ENCODE measurements at regions of chr2 and their contacts with region 1.

Region 1: DNA sequence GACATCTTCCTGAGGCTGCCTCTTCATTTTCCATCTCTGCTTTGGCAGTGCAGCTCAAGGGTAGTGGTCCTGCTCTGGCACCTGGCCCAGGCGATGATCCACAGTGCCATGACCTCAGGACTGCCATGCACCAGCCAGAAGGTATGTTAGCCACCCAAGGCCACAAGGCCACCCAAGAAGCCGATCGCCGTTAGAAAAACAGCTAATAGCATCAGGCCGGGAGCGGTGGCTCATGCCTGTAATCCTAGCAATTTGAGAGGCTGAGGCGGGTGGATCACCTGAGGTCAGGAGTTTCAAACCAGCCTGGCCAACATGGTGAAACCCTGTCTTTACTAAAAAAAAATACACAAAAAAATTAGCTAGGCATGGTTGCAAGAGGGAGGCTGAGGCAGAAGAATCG is 28.4 kb upstream of the UGGT1 start:
- DNase-seq: no peak
- H3K4me3 ChIP-seq: no peak overlapping the region
- H3K27ac ChIP-seq: no peak overlapping the region
- H3K4me1 ChIP-seq: peaks cover 0 to 4% of the 10 kb centered on the region in 2 experiments; a peak in 1 of 4 replicates
- H3K27me3 ChIP-seq: no peaks in the 10 kb centered on the region
- CTCF ChIP-seq: no peak
- EP300 ChIP-seq: no peak
- RAD21 ChIP-seq: no peak

Region 2: DNA sequence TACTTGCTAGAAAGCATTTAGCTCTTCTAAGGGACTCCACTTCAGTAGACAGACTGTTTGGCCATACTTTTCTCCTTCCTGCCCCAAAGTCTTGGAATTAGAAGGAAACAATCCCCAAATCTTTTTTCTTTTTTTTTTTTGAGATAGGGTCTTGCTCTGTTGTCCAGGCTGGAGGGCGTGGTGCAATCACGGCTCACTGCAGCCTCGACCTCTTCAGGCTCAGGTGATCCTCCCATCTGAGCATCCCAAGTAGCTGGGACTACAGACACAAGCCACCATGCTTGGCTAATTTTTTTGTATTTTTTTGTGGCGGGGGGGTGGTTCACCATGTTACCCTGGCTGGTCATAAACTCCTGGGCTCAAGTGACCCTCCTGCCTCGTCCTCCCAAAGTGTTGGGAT is 22.2 kb after region 1 on chr2:
- CTCF ChIA-PET with region 1: interaction called, 33 read pairs
- POLR2A ChIA-PET with region 1: no interaction called
- DNase-seq: no peak
- H3K4me3 ChIP-seq: no peak overlapping the region
- H3K27ac ChIP-seq: no peak overlapping the region
- H3K4me1 ChIP-seq: no peaks in the 10 kb centered on the region
- H3K27me3 ChIP-seq: no peaks in the 10 kb centered on the region; the same call in 1 of the 2 replicates
- CTCF ChIP-seq: no peak
- EP300 ChIP-seq: no peak
- RAD21 ChIP-seq: no peak

Region 3: DNA sequence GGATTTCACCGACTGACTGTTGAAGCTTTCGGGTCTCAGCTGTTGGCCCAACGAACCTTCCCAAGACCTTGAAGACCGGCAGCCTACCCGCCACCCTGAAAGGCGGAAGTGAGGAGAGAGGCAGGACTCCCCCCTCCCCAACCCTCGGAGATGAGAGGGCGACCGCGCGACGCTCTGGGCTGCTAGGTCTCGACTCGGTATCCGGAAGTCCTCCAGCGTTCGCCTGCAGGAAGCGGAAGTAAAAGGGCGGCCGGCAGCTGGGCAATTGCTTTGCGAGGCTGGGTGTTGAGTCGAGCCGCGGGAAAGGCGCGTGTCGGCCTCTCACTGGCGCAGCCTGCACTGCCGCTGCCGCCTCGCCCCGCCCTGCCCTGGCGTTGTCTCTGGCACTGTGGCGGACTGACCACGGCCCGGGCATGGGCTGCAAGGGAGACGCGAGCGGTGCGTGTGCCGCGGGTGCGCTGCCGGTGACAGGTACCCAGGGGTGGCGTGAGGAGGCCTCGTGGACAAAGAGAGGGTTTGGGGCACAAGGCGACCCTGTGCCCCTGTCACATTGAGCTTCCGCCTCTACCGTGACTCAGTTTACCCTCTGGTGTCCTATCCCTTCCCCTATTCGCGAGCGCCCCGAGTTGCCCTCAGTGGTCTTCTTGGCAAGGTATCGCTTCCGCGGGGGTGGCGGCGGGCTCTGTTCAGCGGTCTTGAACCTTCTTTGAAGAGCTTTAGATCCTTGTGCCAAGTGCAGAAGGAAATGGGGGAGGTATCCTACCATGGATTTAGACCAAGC is 28.6 kb after region 1 on chr2 and contains the start of gene UGGT1:
- CTCF ChIA-PET with region 1: interaction called, 20 read pairs
- POLR2A ChIA-PET with region 1: no interaction called
- DNase-seq: peak; percentile 96
- H3K4me3 ChIP-seq: peak within 1 kb of the TSS; percentile 90 to 97
- H3K27ac ChIP-seq: peak within 1 kb of the TSS; percentile 78 to 84
- H3K4me1 ChIP-seq: peaks cover 0 to 13% of the 10 kb centered on the region in 2 experiments; a peak in 3 of 4 replicates
- H3K27me3 ChIP-seq: no peaks in the 10 kb centered on the region
- CTCF ChIP-seq: no peak
- EP300 ChIP-seq: 0 out of 4 replicates have a peak, but pooled peaks of 1 of the 2 experiments have one; percentile 18
- RAD21 ChIP-seq: no peak
- polyA plus RNA-seq, gene UGGT1: 20.0 and 25.7 TPM in 2 replicates

Region 4: DNA sequence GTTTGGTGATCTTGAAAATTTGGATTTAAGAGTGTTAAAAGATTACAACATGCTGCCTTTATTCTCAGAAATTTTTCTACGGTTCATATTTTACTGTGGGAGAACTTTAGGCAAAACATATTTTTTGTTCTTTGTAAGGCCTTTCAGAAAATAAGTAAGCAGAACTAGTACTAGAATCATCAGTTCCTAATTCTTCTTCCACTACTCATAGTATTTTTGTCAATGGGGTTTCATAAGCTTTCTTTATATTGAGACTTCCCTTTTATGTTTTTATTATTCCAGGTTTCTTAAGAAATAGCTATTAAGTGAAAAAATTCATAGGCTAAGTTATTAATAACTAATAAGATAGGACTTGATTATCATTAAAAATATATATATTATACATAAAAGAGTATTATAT is 40.8 kb after region 1 on chr2:
- CTCF ChIA-PET with region 1: interaction called, 11 read pairs
- POLR2A ChIA-PET with region 1: no interaction called
- DNase-seq: no peak
- H3K4me3 ChIP-seq: no peak overlapping the region
- H3K27ac ChIP-seq: no peak overlapping the region
- H3K4me1 ChIP-seq: peaks cover 0 to 5% of the 10 kb centered on the region in 2 experiments; a peak in 2 of 4 replicates
- H3K27me3 ChIP-seq: no peaks in the 10 kb centered on the region
- CTCF ChIP-seq: no peak
- EP300 ChIP-seq: no peak
- RAD21 ChIP-seq: no peak

Region 5: GRCh38 chr2:128137094-128137616 is 74.6 kb after region 1 on chr2:
- CTCF ChIA-PET with region 1: no interaction called
- POLR2A ChIA-PET with region 1: no interaction called
- DNase-seq: no peak
- H3K4me3 ChIP-seq: no peak overlapping the region
- H3K27ac ChIP-seq: no peak overlapping the region
- H3K4me1 ChIP-seq: no peaks in the 10 kb centered on the region
- H3K27me3 ChIP-seq: no peaks in the 10 kb centered on the region
- CTCF ChIP-seq: no peak
- EP300 ChIP-seq: no peak
- RAD21 ChIP-seq: no peak

Region 6: DNA sequence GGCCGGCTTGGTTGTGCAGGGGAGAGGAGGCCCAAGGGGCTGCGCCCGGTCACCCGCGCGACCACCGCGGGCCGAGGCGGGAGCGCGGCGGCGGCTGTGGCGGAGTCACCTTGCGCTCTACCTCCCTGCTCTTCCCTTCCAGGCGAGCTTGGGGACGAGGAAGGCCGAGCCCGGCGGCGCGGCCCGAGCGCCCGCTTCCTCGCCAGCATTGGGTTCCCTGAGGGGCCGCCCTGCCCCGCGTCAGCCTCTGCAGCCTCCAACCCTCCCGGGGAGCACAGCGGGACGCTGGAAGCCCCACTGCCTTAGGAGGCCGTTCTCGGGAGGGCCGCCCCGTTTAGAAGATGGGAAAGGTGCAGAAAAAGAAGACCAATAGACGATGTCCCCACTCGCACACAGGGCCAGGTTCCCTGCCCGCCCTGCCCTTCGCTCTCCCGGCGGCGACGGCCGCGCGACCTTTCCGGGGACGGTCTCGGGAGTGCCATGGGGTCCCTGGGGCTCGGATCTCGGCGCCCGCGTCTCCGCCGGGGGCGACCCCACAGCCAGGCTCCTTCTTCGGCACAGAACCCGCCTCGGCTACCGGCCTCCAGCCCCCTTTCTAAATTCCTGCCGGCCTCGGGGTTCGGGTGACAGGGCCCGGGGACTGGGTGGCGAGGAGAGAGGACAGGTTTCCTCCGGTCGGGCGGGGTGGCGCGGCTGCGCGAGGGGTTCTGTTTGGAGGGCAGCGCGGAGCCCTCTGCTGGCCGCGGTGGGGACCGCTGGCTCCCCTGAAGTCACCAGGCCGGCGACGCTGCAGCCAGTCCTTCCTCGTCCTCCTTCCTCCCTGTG is 170.6 kb after region 1 on chr2:
- CTCF ChIA-PET with region 1: interaction called, 69 read pairs
- POLR2A ChIA-PET with region 1: no interaction called
- DNase-seq: peak; percentile 97
- H3K4me3 ChIP-seq: peak overlapping the region; percentile 62 to 81
- H3K27ac ChIP-seq: no peak overlapping the region
- H3K4me1 ChIP-seq: peaks cover 2 to 4% of the 10 kb centered on the region in 2 experiments; a peak in 1 of 4 replicates
- H3K27me3 ChIP-seq: no peaks in the 10 kb centered on the region; the same call in 1 of the 2 replicates
- CTCF ChIP-seq: peak; percentile 80
- EP300 ChIP-seq: no peak
- RAD21 ChIP-seq: peak; percentile 66

Region 7: GRCh38 chr2:128321784-128322714 is 259.5 kb after region 1 on chr2:
- CTCF ChIA-PET with region 1: interaction called, 13 read pairs
- POLR2A ChIA-PET with region 1: no interaction called
- DNase-seq: peak; percentile 96
- H3K4me3 ChIP-seq: peak overlapping the region; percentile 60 to 68
- H3K27ac ChIP-seq: peak overlapping the region in 1 of 2 experiments; percentile 79; a peak in 1 of 4 replicates
- H3K4me1 ChIP-seq: peaks cover 3 to 38% of the 10 kb centered on the region in 2 experiments; a peak in 2 of 4 replicates
- H3K27me3 ChIP-seq: no peaks in the 10 kb centered on the region
- CTCF ChIP-seq: peak; percentile 90
- EP300 ChIP-seq: peak in 1 of 2 experiments; percentile 54; a peak in 2 of 4 replicates
- RAD21 ChIP-seq: peak; percentile 88

Measured in SK-N-SH (cell line).